HepG2 (cell line): ENCODE measurements at regions of chr6 and their contacts with region 1.

Region 1: GRCh38 chr6:140366989-140367388 is 992.5 kb upstream of the CITED2 start:
- DNase-seq: no peak
- ATAC-seq: no peak
- H3K4me3 ChIP-seq: no peak overlapping the region
- H3K27ac ChIP-seq: no peak overlapping the region
- H3K4me1 ChIP-seq: no peaks in the 10 kb centered on the region
- H3K27me3 ChIP-seq: no peaks in the 10 kb centered on the region
- CTCF ChIP-seq: no peak
- EP300 ChIP-seq: 0 out of 4 replicates have a peak, but pooled peaks of 1 of the 2 experiments have one; percentile 5
- POLR2A ChIP-seq: no peak
- RAD21 ChIP-seq: no peak

Region 2: DNA sequence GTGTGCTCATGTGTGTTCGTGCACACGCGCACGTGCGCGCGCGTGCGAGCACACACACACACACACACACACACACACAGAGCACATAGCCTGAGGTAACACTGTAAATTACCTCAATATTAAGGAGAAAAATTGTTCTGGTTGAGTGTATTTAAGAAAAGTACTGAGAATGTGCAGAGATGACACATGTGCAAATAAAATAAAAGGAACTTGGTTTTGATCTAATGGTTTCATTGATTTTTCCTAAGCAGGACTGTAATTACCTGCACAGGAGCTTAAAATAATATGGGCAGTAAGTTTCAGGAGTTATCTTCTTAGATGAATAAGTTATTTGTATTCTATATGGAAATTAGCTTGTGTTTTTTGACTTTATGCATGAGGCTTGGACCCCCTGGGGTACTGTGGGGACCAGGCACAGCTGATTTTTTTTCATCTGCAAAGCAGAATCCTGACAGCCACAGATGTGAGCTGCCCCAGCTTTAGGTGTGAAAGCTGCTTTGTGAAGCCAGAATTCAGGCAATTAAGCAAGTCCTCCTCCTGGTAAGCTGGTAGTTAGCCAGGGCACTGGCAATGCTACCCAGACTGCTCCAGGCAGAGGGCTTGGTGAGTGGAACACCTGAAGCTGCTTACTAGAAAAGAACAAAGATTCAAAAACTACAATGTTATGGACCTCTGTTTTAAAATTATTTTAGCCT is 48.1 kb after region 1 on chr6:
- CTCF ChIA-PET with region 1: no interaction called
- POLR2A ChIA-PET with region 1: no interaction called
- in situ Hi-C with region 1: no loop called
- intact Hi-C with region 1: loop called (anchors 1 kb)
- DNase-seq: no peak
- ATAC-seq: no peak
- H3K4me3 ChIP-seq: no peak overlapping the region
- H3K27ac ChIP-seq: no peak overlapping the region
- H3K4me1 ChIP-seq: no peaks in the 10 kb centered on the region
- H3K27me3 ChIP-seq: no peaks in the 10 kb centered on the region
- CTCF ChIP-seq: no peak
- EP300 ChIP-seq: no peak
- POLR2A ChIP-seq: no peak
- RAD21 ChIP-seq: no peak

Region 3: DNA sequence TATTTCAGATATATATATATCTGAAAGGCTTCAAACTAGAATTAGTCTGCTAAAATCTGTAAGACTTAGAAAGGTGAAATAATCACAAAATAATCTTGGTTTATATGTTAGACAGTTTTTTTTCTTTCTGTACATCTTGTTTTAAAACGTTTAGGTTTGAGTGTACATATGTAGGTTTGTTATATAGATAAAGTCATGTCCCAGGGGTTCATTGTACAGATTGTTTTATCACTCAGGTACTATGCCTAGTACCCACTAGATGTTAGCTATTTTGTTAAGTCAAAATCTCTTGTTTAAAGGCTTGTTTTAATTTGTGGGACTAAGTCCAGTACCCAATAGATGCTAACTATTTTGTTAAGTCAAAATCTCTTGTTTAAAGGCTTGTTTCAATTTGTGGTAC is 346.5 kb after region 1 on chr6:
- CTCF ChIA-PET with region 1: no interaction called
- POLR2A ChIA-PET with region 1: no interaction called
- in situ Hi-C with region 1: no loop called
- intact Hi-C with region 1: no loop called
- DNase-seq: no peak
- ATAC-seq: no peak; the same call in 2 of the 3 replicates
- H3K4me3 ChIP-seq: no peak overlapping the region
- H3K27ac ChIP-seq: no peak overlapping the region
- H3K4me1 ChIP-seq: no peaks in the 10 kb centered on the region
- H3K27me3 ChIP-seq: no peaks in the 10 kb centered on the region
- CTCF ChIP-seq: no peak
- EP300 ChIP-seq: no peak
- POLR2A ChIP-seq: no peak
- RAD21 ChIP-seq: no peak